ENCODE measurements at regions of chr1 and their contacts with region 1.

Region 1: DNA sequence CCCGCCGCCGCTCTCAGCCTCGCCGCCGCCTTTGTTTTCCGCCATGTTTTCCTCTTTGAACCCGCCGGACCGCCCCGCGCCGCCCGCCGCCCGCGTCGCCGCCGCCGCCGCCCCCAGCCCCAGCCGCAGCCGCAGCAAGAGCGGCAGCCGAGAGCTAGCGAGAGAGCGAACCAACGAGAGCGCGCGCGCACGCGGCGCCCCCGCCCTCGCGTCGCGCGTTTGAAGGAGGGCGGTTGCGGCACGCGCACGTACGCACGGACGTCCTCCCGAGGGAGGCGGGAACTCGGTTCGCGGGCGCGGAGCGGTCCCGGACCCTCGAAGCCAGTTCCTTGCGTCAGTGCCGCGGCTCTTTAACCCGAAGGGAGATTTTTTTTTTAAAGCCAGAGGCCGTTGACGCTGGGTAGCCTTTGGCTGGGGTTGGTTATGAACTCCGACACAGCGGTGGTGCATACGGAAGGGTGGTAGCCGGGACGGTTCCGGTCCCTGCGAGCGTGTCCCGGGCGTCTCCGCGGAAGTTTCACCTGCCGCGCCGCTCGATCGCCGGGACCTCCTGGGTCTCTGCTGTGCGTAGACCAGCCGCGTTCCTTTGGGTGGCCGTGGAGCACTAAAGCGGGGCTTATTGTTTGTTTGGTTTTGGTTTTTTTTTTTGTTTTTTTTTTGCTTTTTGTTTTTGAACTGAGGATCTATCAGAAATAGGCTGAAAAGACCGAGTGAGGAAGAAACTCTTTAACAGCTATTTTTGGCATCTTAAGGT is at the start of gene TRIM33:
- DNase-seq: peak; percentile 97
- ATAC-seq: peak; percentile 75
- H3K4me3 ChIP-seq: peak within 1 kb of the TSS; percentile 67 to 98 (median 95)
- H3K4me3 Mint-ChIP-seq: peak within 1 kb of the TSS; percentile 91
- H3K27ac ChIP-seq: peak within 1 kb of the TSS; percentile 98 to 100
- H3K27ac Mint-ChIP-seq: peak within 1 kb of the TSS; percentile 98
- H3K4me1 ChIP-seq: peaks cover 36 to 41% of the 10 kb centered on the region in 2 donors
- H3K4me1 Mint-ChIP-seq: peaks cover 50% of the 10 kb centered on the region
- H3K27me3 ChIP-seq: no peaks in the 10 kb centered on the region
- H3K27me3 Mint-ChIP-seq: no peaks in the 10 kb centered on the region
- CTCF ChIP-seq: no peak
- total RNA-seq, gene TRIM33: 61.0 and 67.3 TPM in 2 replicates

Region 2: DNA sequence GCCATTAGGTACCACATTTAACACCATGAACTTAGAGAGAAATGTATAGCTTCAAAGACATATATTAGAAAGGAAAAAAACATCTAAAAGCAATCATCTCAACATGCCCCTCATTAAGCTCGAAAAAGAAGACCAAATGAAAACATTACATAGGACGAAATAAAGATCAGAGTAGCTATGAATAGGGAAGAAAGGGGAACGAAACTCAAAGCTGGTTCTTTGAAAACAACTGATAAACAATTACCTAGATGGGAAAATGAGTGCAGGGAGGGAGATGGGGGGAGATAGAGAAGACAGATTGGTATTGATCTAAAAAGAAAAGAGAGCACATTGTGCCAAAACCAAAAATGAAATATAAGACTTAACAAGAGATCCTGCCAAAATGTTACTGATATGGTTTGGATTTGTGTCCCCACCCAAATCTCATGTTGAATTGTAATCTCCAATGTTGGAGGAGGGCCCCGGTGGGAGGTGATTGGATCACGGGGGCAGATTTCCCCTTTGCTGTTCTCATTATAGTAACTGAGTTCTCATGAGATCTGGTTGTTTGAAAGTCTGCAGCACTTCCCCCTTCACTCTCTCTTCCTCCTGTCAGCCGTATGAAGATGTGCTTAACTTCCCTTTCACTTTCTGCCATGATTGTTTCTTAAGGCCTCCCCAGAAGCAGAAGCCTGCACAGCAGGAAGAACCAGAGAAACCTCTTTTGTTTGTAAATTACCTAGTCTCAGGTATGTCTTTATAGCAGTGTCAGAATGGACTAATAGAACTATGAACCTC is 28.8 kb before region 1 on chr1:
- CTCF ChIA-PET with region 1: interaction called, 3 read pairs
- POLR2A ChIA-PET with region 1: interaction called, 3 read pairs
- intact Hi-C with region 1: loop called (anchors 1 kb)
- DNase-seq: peak; percentile 85
- ATAC-seq: peak; percentile 92
- H3K4me3 ChIP-seq: peak overlapping the region in 3 of 5 experiments; percentile 8 to 48 (median 12)
- H3K4me3 Mint-ChIP-seq: peak overlapping the region; percentile 64
- H3K27ac ChIP-seq: peak overlapping the region; percentile 67 to 93
- H3K27ac Mint-ChIP-seq: peak overlapping the region; percentile 65
- H3K4me1 ChIP-seq: peaks cover 14 to 18% of the 10 kb centered on the region in 2 donors
- H3K4me1 Mint-ChIP-seq: peaks cover 46% of the 10 kb centered on the region
- H3K27me3 ChIP-seq: no peaks in the 10 kb centered on the region
- H3K27me3 Mint-ChIP-seq: no peaks in the 10 kb centered on the region
- CTCF ChIP-seq: no peak

Region 3: GRCh38 chr1:114558544-114558943 is 47.3 kb after region 1 on chr1:
- CTCF ChIA-PET with region 1: no interaction called
- POLR2A ChIA-PET with region 1: interaction called, 3 read pairs
- intact Hi-C with region 1: loop called (anchors 2 kb)
- DNase-seq: peak; percentile 49
- ATAC-seq: peak; percentile 63
- H3K4me3 ChIP-seq: peak overlapping the region in 1 of 5 experiments; percentile 3
- H3K4me3 Mint-ChIP-seq: peak overlapping the region; percentile 3
- H3K27ac ChIP-seq: peak overlapping the region in 1 of 2 donors; percentile 21
- H3K27ac Mint-ChIP-seq: peak overlapping the region; percentile 16
- H3K4me1 ChIP-seq: peaks cover 31% of the 10 kb centered on the region in 2 donors
- H3K4me1 Mint-ChIP-seq: peaks cover 31% of the 10 kb centered on the region
- H3K27me3 ChIP-seq: no peaks in the 10 kb centered on the region
- H3K27me3 Mint-ChIP-seq: no peaks in the 10 kb centered on the region
- CTCF ChIP-seq: peak; percentile 75

Region 4: DNA sequence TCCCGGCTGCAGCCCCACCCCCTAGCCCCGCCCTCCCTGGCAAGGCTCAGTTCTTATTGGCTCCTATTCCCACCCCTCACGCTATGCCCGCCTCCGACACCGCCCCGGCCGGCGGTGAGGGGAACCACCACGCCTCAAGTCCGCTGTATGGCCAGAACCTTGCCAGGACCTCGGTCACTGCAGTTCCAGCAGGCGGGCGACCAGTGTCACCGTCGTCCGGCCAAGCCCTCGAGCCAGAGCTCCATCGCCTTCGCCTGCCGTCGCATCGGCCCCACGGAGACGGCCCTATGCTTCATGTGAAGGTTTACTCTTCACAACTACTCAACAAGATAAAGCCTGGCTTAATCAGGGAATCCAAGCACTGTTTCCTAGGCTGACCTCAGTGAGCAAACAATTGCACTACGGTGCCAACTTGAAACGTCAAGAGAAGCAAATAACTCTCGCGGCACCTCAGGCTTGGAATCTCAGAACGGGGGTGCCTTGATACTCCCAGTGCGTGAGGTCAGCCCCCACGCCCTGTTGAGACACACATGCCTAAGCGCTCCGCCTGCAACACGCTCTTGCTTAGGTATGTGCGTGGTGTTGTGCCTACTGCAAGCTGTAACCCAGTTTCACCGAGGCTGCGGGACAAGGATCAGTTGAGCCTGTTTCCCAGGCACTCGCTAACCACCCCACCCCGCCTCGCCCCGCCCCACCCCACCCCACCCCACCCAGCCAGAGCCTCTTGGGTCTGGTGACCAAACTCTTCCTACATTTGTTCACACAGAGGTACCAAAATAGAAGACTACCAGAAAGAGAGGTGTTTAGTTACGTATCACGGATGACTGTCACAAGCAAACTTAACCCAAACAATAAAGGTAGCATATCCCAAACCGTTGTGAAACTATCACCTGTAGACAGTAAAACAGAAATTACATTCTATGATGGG is 159.1 kb after region 1 on chr1:
- CTCF ChIA-PET with region 1: no interaction called
- POLR2A ChIA-PET with region 1: interaction called, 3 read pairs
- intact Hi-C with region 1: loop called (anchors 1 kb)
- DNase-seq: peak; percentile 91
- ATAC-seq: peak; percentile 99
- H3K4me3 ChIP-seq: peak overlapping the region; percentile 65 to 84 (median 72)
- H3K4me3 Mint-ChIP-seq: peak overlapping the region; percentile 99
- H3K27ac ChIP-seq: no peak overlapping the region
- H3K27ac Mint-ChIP-seq: peak overlapping the region; percentile 73
- H3K4me1 ChIP-seq: peaks cover 6 to 14% of the 10 kb centered on the region in 2 donors
- H3K4me1 Mint-ChIP-seq: peaks cover 14% of the 10 kb centered on the region
- H3K27me3 ChIP-seq: peaks cover 0 to 6% (median 0%) of the 10 kb centered on the region in 4 experiments
- H3K27me3 Mint-ChIP-seq: peaks cover 45% of the 10 kb centered on the region
- CTCF ChIP-seq: no peak

Region 5: DNA sequence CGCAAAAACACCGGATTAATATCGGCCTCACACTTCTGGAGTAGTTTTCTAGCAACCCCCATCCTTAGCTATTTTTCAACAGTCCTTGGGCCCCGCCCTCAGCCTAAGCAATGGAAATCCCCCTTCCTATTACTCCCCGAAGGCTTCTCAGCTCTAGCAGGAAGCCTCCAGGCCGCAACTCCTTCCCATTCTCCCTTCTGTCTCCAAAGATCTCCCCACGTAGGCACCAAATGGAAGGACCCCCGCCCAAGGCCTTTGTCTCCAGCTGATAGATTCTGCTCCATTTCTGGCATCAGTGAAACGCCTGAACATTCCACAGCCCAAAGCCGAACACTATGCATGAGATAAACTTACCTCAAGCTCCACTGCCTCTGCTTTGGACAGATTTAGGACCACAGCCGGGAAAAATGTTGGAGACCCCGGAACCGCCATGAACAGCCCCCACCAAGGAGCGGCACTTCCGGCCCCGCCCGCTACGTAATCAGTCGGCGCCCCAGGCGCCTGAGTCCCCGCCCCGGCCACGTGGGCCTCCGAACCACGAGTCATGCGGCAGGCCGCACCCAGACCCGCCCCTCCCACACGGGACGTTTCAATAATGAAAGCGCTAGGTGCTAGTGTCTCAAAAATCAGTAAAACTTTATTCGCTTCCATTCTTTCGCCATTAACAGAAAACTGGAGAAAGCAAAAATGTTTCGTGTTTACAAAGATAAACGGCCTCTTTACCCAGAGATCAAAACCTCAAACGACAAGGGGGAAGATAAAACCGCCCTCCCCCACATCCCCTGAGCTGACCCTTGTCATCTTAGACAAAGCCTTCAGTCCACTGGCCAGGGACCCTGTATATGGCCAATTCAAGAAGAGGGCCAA is 205.3 kb after region 1 on chr1 and contains the start of gene NRAS:
- CTCF ChIA-PET with region 1: no interaction called
- POLR2A ChIA-PET with region 1: interaction called, 6 read pairs
- intact Hi-C with region 1: loop called (anchors 2 kb)
- DNase-seq: peak; percentile 96
- ATAC-seq: peak; percentile 96
- H3K4me3 ChIP-seq: peak within 1 kb of the TSS; percentile 69 to 95 (median 89)
- H3K4me3 Mint-ChIP-seq: peak within 1 kb of the TSS; percentile 99
- H3K27ac ChIP-seq: peak within 1 kb of the TSS; percentile 97
- H3K27ac Mint-ChIP-seq: peak within 1 kb of the TSS; percentile 99
- H3K4me1 ChIP-seq: peaks cover 15 to 16% of the 10 kb centered on the region in 2 donors
- H3K4me1 Mint-ChIP-seq: peaks cover 29% of the 10 kb centered on the region
- H3K27me3 ChIP-seq: no peaks in the 10 kb centered on the region
- H3K27me3 Mint-ChIP-seq: no peaks in the 10 kb centered on the region
- CTCF ChIP-seq: no peak
- total RNA-seq, gene NRAS: 35.0 and 35.3 TPM in 2 replicates

Region 6: GRCh38 chr1:114780344-114781226 is 269.4 kb after region 1 on chr1 and contains the start of gene SIKE1:
- CTCF ChIA-PET with region 1: no interaction called
- POLR2A ChIA-PET with region 1: no interaction called
- intact Hi-C with region 1: loop called (anchors 1 kb)
- DNase-seq: peak; percentile 94
- ATAC-seq: peak; percentile 97
- H3K4me3 ChIP-seq: peak within 1 kb of the TSS; percentile 94 to 99 (median 96)
- H3K4me3 Mint-ChIP-seq: peak within 1 kb of the TSS; percentile 100
- H3K27ac ChIP-seq: peak within 1 kb of the TSS; percentile 75 to 84
- H3K27ac Mint-ChIP-seq: peak within 1 kb of the TSS; percentile 98
- H3K4me1 ChIP-seq: peaks cover 9 to 10% of the 10 kb centered on the region in 2 donors
- H3K4me1 Mint-ChIP-seq: peaks cover 26% of the 10 kb centered on the region
- H3K27me3 ChIP-seq: no peaks in the 10 kb centered on the region
- H3K27me3 Mint-ChIP-seq: peaks cover 9% of the 10 kb centered on the region
- CTCF ChIP-seq: no peak
- total RNA-seq, gene SIKE1: 44.8 and 47.8 TPM in 2 replicates